Dendritic cell treated with granulocyte-macrophage colony-stimulating factor and Interleukin-4, amounts not matched to agents 40 ng/mL and 50 ng/mL, for 4 days (primary cell): ENCODE measurements at regions of chr12 and their contacts with region 1.

Region 1: DNA sequence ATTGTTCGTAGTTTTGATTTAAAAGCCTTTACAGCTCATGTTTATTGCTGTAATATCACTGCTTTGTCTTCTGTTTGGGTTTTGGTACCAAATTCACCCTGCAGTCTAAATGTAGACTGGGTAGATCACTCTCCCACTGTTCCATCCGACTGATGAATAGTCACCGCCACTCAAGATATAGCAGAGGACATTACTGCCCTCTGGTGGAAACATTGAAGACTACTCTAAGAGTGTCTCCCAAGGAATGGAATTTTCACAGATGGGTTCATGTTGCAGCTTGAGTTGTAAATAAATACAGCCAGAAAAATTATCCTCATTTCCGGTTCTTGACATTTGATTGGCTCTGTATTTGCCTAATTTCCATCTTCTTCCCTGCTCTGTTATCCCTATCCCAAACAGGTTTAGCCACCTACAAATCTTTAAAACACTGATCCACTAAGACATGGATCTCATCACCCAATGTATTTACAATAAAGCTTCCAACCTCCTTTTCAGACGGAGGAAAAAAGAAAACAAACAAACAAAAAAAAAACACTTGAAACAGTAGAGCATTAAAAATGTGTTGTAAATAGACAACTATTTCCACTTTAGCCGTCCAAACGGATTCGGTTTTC is 198.3 kb upstream of the CPNE8 start:
- H3K4me3 Mint-ChIP-seq: no peak overlapping the region
- H3K27ac Mint-ChIP-seq: no peak overlapping the region
- H3K4me1 Mint-ChIP-seq: peaks cover 5% of the 10 kb centered on the region
- H3K27me3 Mint-ChIP-seq: no peaks in the 10 kb centered on the region

Region 2: DNA sequence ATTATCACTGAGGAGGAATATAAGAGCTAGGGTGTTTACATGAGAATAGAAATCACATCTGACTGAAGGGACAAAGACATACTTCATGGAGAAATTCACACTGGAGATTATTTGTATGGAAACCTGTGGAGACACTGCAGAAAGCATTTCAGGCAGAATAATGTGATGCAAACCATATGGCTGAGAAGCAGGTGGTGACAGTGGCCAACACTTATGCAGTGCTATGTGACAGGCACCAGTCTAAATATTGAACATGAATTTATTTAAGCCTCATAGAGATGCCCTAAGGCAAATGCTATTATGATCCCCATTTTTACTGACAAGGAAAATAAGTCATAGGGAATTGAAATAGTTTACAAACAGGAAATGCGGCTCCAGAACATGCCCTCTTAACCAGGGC is 770.8 kb before region 1 on chr12:
- intact Hi-C with region 1: loop called (anchors 1 kb)
- H3K4me3 Mint-ChIP-seq: no peak overlapping the region
- H3K27ac Mint-ChIP-seq: no peak overlapping the region
- H3K4me1 Mint-ChIP-seq: peaks cover 8% of the 10 kb centered on the region
- H3K27me3 Mint-ChIP-seq: no peaks in the 10 kb centered on the region

Region 3: GRCh38 chr12:38664661-38665269 is 438.9 kb before region 1 on chr12:
- intact Hi-C with region 1: no loop called
- H3K4me3 Mint-ChIP-seq: no peak overlapping the region
- H3K27ac Mint-ChIP-seq: no peak overlapping the region
- H3K4me1 Mint-ChIP-seq: peaks cover 16% of the 10 kb centered on the region
- H3K27me3 Mint-ChIP-seq: no peaks in the 10 kb centered on the region

Region 4: DNA sequence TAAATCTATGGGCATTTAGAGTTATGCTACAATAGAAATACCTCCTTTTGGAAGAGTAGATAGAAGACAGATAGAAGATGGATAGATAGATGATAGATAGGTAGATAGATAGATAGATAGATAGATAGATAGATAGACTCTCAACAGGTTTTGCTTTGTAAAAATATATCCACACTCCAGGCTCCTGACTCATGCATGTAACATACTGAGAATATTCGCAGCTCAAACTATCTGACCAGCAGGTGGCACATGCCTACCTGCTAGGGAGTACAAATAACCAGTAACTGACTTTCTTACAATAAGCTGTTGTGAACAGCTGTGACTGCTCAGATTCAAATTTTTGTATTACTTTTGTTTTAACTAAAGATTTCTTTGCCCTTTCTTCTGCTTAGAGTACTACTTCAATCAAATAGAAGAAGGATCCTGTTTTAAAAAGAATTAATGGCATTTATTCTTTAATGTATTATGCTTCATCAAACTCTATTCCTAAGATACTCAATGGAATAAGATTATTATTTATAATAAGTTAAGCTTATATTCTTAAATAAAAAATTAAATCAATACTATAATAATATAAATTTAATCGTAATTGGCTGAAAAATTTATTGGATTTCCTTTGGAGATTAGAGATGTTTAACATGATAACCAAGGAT is 182.5 kb before region 1 on chr12:
- intact Hi-C with region 1: loop called (anchors 2 kb)
- H3K4me3 Mint-ChIP-seq: no peak overlapping the region
- H3K27ac Mint-ChIP-seq: no peak overlapping the region
- H3K4me1 Mint-ChIP-seq: no peaks in the 10 kb centered on the region
- H3K27me3 Mint-ChIP-seq: no peaks in the 10 kb centered on the region